PC-9 (cell line): ENCODE measurements at regions of chr9 and their contacts with region 1.

Region 1: GRCh38 chr9:89318123-89319014 is at the start of gene SECISBP2:
- DNase-seq: peak; percentile 89 to 99
- H3K4me3 ChIP-seq: peak within 1 kb of the TSS; percentile 72
- H3K27ac ChIP-seq: peak within 1 kb of the TSS; percentile 93
- H3K4me1 ChIP-seq: peaks cover 54% of the 10 kb centered on the region
- H3K27me3 ChIP-seq: no peaks in the 10 kb centered on the region
- CTCF ChIP-seq: peak; percentile 74
- total RNA-seq, gene SECISBP2: 33.3 and 41.4 TPM in 2 replicates

Region 2: GRCh38 chr9:87734106-87734505 is 1584.3 kb before region 1 on chr9:
- CTCF ChIA-PET with region 1: interaction called, 25 read pairs
- POLR2A ChIA-PET with region 1: no interaction called
- intact Hi-C with region 1: no loop called
- DNase-seq: no peak
- H3K4me3 ChIP-seq: no peak overlapping the region
- H3K27ac ChIP-seq: no peak overlapping the region
- H3K4me1 ChIP-seq: 0 out of 2 replicates have a peak, but pooled peaks cover 2% of the 10 kb centered on the region
- H3K27me3 ChIP-seq: no peaks in the 10 kb centered on the region
- CTCF ChIP-seq: no peak

Region 3: GRCh38 chr9:87818308-87818707 is 1500.1 kb before region 1 on chr9:
- CTCF ChIA-PET with region 1: no interaction called
- POLR2A ChIA-PET with region 1: interaction called, 15 read pairs
- intact Hi-C with region 1: no loop called
- DNase-seq: no peak
- H3K4me3 ChIP-seq: no peak overlapping the region
- H3K27ac ChIP-seq: no peak overlapping the region
- H3K4me1 ChIP-seq: no peaks in the 10 kb centered on the region
- H3K27me3 ChIP-seq: no peaks in the 10 kb centered on the region
- CTCF ChIP-seq: no peak

Region 4: DNA sequence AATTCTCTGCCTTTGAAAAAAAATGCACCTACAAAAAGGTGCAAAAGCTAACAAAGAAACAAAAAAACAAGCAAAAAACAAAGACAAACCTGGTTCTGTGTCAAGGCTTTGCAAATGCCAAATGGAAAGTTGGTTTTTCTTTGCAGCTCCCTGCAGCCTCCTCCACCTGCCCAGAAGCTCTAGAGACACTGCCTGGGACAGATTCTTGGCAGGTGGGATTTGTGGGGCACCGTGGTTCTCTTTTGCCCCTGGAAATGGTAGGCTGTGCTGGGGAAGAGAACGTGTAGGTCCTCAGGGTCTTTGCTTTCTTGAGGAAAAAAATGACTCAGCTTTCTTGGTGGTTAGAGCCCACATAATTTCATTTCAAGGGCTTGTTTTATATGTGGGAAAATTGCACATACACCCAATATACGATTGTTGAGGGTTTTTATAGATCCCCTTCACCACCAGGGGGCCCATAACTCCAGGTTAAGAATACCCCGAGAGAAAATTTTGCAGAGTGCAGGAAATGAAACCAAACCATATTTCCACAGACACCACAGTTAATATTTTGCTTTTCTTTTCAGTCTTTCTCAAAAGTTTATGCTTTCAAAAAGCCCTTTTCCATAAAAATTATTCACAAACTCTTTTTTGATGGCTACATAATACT is 724.7 kb before region 1 on chr9:
- CTCF ChIA-PET with region 1: no interaction called
- POLR2A ChIA-PET with region 1: no interaction called
- intact Hi-C with region 1: loop called (anchors 10 kb)
- DNase-seq: peak in 1 of 2 experiments; percentile 52
- H3K4me3 ChIP-seq: no peak overlapping the region
- H3K27ac ChIP-seq: no peak overlapping the region
- H3K4me1 ChIP-seq: no peaks in the 10 kb centered on the region
- H3K27me3 ChIP-seq: no peaks in the 10 kb centered on the region
- CTCF ChIP-seq: peak; percentile 86

Region 5: GRCh38 chr9:89549031-89549644 is 230.8 kb after region 1 on chr9:
- CTCF ChIA-PET with region 1: interaction called, 6 read pairs
- POLR2A ChIA-PET with region 1: no interaction called
- intact Hi-C with region 1: loop called (anchors 1 kb)
- DNase-seq: peak in 1 of 2 experiments; percentile 75
- H3K4me3 ChIP-seq: no peak overlapping the region
- H3K27ac ChIP-seq: no peak overlapping the region
- H3K4me1 ChIP-seq: no peaks in the 10 kb centered on the region
- H3K27me3 ChIP-seq: peaks cover 5% of the 10 kb centered on the region; the same call in 1 of the 2 replicates
- CTCF ChIP-seq: peak; percentile 88